Activated CD4-positive, alpha-beta memory T cell treated with anti-CD3 and anti-CD28 coated beads for 36 hours (primary cell): ENCODE measurements at regions of chr10 and their contacts with region 1.

Region 1: GRCh38 chr10:11178606-11179515 is 161.2 kb downstream of the CELF2 start:
- DNase-seq: peak; percentile 92
- H3K4me3 Mint-ChIP-seq: peak overlapping the region; percentile 89
- H3K27ac Mint-ChIP-seq: no peak overlapping the region
- H3K4me1 Mint-ChIP-seq: peaks cover 95% of the 10 kb centered on the region
- H3K27me3 Mint-ChIP-seq: no peaks in the 10 kb centered on the region

Region 2: GRCh38 chr10:11145495-11145855 is 33.4 kb before region 1 on chr10:
- CTCF ChIA-PET with region 1: interaction called, 4 read pairs
- POLR2A ChIA-PET with region 1: interaction called, 18 read pairs
- intact Hi-C with region 1: loop called (anchors 5 kb)
- DNase-seq: peak; percentile 78
- H3K4me3 Mint-ChIP-seq: peak overlapping the region; percentile 64
- H3K27ac Mint-ChIP-seq: peak overlapping the region; percentile 93
- H3K4me1 Mint-ChIP-seq: peaks cover 86% of the 10 kb centered on the region
- H3K27me3 Mint-ChIP-seq: no peaks in the 10 kb centered on the region

Region 3: DNA sequence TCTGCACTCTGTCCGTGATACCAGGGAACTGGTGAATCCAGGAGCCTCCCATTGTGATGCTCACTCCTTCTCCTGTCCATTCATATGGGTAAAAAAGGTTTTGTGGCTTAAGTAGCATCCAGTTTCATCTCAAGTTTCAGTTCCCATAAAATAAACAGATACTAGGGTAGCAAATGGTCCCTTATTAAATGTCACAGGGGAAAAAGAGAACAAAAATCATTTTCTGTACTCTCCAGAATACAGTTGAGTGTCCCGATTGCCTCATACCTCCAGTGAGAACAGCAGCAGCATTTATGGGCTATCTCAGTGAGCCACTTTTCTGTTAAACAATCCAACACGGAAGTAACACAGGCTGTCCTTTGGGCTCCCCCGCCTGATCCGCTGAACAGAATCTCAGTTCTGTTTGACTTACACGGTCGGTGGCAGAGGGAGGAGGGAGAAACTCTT is 18.4 kb after region 1 on chr10:
- CTCF ChIA-PET with region 1: interaction called, 4 read pairs
- POLR2A ChIA-PET with region 1: interaction called, 5 read pairs
- intact Hi-C with region 1: loop called (anchors 1 kb)
- DNase-seq: no peak
- H3K4me3 Mint-ChIP-seq: no peak overlapping the region
- H3K27ac Mint-ChIP-seq: peak overlapping the region; percentile 55
- H3K4me1 Mint-ChIP-seq: peaks cover 97% of the 10 kb centered on the region
- H3K27me3 Mint-ChIP-seq: no peaks in the 10 kb centered on the region

Region 4: DNA sequence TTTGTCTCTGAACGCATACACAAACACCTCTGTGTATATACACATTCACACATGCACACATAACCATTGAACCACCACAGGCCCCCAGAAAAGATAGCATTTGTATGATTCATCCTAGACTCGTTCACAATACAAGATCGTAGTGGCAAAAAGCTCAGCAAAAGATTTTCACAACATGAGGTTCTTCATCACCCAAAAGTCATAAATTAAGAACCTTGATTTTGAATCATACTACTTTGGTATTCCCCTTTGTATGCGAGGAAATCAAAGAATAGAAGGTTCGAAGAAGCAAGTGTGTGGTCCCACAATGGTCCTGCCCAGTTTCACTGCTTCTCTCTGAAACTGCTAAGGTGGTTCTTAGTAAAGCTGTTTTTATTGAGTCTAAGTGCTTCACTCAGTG is 39.5 kb after region 1 on chr10:
- CTCF ChIA-PET with region 1: interaction called, 3 read pairs
- POLR2A ChIA-PET with region 1: interaction called, 28 read pairs
- intact Hi-C with region 1: no loop called
- DNase-seq: peak; percentile 67
- H3K4me3 Mint-ChIP-seq: peak overlapping the region; percentile 9
- H3K27ac Mint-ChIP-seq: peak overlapping the region; percentile 87
- H3K4me1 Mint-ChIP-seq: peaks cover 74% of the 10 kb centered on the region
- H3K27me3 Mint-ChIP-seq: no peaks in the 10 kb centered on the region

Region 5: DNA sequence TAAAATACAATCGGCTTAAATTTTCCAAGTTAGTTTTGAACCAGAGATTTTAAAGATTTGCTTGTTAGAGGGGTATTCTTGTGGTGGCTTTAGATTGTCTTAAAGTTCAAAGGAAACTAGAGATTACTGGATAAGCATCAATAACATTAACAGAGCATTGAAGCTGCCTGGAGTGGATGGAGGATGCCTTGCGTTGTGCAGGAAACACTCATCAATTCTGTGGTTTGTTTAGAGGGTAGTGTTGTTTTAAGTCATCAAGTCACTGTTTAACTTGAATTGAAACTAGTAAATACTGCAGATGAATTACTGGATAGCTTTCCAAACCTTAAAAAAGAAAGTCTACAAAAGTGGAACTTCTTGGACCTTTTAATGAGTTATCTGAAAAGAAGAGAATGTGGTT is 57.4 kb after region 1 on chr10:
- CTCF ChIA-PET with region 1: interaction called, 4 read pairs
- POLR2A ChIA-PET with region 1: interaction called, 45 read pairs
- intact Hi-C with region 1: loop called (anchors 1 kb)
- DNase-seq: peak; percentile 61
- H3K4me3 Mint-ChIP-seq: peak overlapping the region; percentile 66
- H3K27ac Mint-ChIP-seq: peak overlapping the region; percentile 93
- H3K4me1 Mint-ChIP-seq: peaks cover 97% of the 10 kb centered on the region
- H3K27me3 Mint-ChIP-seq: no peaks in the 10 kb centered on the region

Region 6: DNA sequence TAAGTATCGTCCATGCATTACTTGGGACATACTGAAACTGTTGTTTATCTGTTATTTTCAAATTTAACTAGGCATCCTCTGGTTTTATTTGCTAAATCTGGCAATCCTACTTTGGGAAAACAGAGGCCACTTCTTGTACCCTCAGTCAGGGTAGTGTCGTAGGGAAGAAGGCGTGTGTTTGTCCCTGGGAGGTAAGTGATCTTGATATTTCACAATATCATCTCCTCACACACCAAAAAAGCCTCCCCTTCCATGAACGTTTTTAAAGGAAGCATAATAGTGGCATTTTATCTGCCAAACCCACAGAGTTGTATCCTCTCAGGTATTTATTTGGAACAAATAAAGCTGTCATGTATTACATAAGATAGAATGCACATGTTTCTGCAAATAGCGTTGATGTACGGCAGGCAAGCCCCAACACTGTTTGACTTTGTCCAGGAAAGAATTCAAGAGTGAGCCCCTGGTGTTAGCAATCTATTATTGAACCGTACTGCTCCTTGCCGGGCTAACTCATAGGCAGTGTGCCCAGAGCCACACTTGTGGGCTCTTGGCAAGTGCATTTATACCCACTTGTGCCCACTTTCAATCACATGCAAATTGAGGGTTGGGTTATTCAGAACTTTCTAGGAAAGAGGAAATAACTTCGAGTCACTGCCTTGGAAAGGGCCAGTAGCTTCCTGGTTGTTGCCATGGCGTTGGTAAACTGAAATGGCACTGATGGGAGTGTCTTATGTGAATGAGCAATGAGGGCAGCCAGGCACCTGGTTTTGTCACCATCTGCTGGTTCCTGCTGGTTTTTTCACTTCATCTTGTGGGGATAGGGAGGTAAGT is 166.6 kb after region 1 on chr10:
- CTCF ChIA-PET with region 1: no interaction called
- POLR2A ChIA-PET with region 1: no interaction called
- intact Hi-C with region 1: no loop called
- DNase-seq: peak; percentile 59
- H3K4me3 Mint-ChIP-seq: no peak overlapping the region
- H3K27ac Mint-ChIP-seq: no peak overlapping the region
- H3K4me1 Mint-ChIP-seq: peaks cover 5% of the 10 kb centered on the region
- H3K27me3 Mint-ChIP-seq: no peaks in the 10 kb centered on the region

Region 7: GRCh38 chr10:11448545-11449244 is 269.8 kb after region 1 on chr10:
- CTCF ChIA-PET with region 1: no interaction called
- POLR2A ChIA-PET with region 1: no interaction called
- intact Hi-C with region 1: loop called (anchors 10 kb)
- DNase-seq: no peak
- H3K4me3 Mint-ChIP-seq: no peak overlapping the region
- H3K27ac Mint-ChIP-seq: no peak overlapping the region
- H3K4me1 Mint-ChIP-seq: peaks cover 17% of the 10 kb centered on the region
- H3K27me3 Mint-ChIP-seq: no peaks in the 10 kb centered on the region